ENCODE measurements at regions of chr19 and their contacts with region 1.

Region 1: GRCh38 chr19:16185123-16185767 is at the start of gene FAM32A:
- DNase-seq: peak; percentile 100
- H3K4me3 Mint-ChIP-seq: peak within 1 kb of the TSS; percentile 100
- H3K27ac Mint-ChIP-seq: peak within 1 kb of the TSS; percentile 100
- H3K4me1 Mint-ChIP-seq: peaks cover 22% of the 10 kb centered on the region
- H3K27me3 Mint-ChIP-seq: no peaks in the 10 kb centered on the region
- CTCF ChIP-seq: no peak
- total RNA-seq, gene FAM32A: 48.1 and 53.7 TPM in 2 replicates

Region 2: DNA sequence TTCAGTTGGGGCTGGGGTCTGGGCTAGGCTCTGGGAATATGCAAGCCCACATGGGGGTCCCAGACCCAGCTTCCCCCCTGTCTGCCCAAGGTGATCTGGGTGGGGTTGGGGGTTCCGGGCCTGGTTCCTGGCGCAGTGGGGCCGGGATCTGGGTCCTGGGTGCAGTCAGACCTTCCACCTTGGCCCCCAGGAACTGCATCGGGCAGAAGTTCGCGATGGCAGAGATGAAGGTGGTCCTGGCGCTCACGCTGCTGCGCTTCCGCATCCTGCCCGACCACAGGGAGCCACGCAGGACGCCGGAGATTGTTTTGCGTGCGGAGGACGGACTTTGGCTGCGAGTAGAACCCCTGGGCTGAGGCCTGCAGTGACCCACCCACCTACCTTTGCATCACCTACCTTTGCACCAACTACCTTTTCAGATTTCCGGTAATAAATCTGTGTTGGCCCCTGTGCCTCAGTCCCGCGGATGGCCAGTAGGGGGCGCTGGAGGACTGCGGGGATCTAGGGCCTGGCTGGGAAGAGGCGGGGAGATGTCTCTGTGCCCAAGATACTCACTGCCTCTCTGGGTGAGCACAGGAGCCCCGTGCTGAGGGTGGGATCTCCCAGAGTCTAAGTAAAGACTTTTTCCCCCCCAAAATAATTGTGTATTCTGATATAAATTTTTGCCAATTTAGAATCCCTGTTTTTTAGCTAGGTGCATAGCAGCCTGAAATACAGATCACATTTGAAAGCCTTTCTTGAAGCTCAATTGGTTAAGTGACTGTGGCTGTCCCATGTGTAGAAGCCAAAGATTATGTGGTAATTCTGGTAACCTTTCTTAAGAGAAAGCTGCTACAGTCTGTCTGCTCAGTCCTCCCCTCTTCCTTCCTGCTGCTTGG is 556.0 kb before region 1 on chr19:
- CTCF ChIA-PET with region 1: interaction called, 17 read pairs
- POLR2A ChIA-PET with region 1: interaction called, 3 read pairs
- intact Hi-C with region 1: loop called (anchors 1 kb)
- DNase-seq: peak; percentile 69
- H3K4me3 Mint-ChIP-seq: no peak overlapping the region
- H3K27ac Mint-ChIP-seq: no peak overlapping the region
- H3K4me1 Mint-ChIP-seq: no peaks in the 10 kb centered on the region
- H3K27me3 Mint-ChIP-seq: no peaks in the 10 kb centered on the region
- CTCF ChIP-seq: peak; percentile 95

Region 3: DNA sequence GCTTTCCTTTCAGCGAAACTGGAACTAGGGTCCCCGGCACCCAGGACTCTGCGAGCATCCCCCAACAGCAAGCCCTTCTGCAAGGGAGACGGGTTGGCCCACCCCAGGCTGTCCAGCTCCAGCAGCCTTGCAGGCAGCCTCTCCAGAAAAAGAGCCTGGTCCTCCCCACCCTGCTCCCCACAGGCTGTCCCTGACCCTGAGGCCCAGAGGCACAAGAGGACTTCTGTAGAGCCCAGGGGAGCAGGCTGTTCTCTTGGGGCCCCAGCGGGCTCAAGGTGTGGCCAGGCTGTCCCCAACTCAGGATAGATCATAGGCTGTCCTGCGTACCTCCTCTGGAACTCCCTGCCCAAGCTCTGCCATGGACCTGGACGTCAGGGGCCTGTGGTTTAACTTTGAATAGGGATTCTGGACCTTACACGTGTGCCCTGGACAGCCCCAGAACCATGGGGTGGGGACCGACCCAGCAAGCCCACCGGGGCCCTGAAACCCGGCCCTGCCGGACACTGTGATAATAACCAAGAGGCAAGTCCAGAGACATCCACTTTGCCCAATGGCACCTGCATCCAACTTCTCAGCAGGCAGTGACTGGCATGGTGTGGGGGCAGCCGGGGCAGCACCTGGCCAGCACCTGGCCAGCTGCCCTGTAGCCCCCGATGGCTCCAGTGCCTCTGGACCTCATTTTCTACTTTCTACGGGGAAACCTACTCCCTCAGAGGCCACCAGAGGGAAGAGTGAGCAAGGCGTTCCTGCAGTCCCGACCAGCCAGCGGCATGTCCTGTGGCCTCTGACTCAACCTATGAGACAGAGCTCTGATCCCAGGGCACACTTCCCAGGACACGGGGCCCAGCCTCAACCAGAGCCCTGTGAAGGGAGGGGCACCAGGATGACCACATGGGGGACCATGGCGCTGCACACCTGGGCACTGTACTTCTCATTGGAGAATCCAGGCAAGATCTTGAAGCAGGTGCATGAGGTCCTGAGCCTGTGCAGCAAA is 159.8 kb before region 1 on chr19:
- CTCF ChIA-PET with region 1: interaction called, 5 read pairs
- POLR2A ChIA-PET with region 1: no interaction called
- intact Hi-C with region 1: loop called (anchors 1 kb)
- DNase-seq: peak; percentile 74
- H3K4me3 Mint-ChIP-seq: no peak overlapping the region
- H3K27ac Mint-ChIP-seq: no peak overlapping the region
- H3K4me1 Mint-ChIP-seq: peaks cover 4% of the 10 kb centered on the region
- H3K27me3 Mint-ChIP-seq: no peaks in the 10 kb centered on the region
- CTCF ChIP-seq: peak; percentile 39

Region 4: GRCh38 chr19:16076154-16076957 is 108.9 kb before region 1 on chr19 and contains the start of gene TPM4:
- CTCF ChIA-PET with region 1: interaction called, 3 read pairs
- POLR2A ChIA-PET with region 1: interaction called, 6 read pairs
- intact Hi-C with region 1: loop called (anchors 1 kb)
- DNase-seq: peak; percentile 94
- H3K4me3 Mint-ChIP-seq: peak within 1 kb of the TSS; percentile 71
- H3K27ac Mint-ChIP-seq: peak within 1 kb of the TSS; percentile 99
- H3K4me1 Mint-ChIP-seq: peaks cover 19% of the 10 kb centered on the region
- H3K27me3 Mint-ChIP-seq: no peaks in the 10 kb centered on the region
- CTCF ChIP-seq: no peak
- total RNA-seq, gene TPM4: 355 and 424 TPM in 2 replicates

Region 5: GRCh38 chr19:16111160-16111908 is 73.9 kb before region 1 on chr19 and contains the start of gene RAB8A:
- CTCF ChIA-PET with region 1: interaction called, 3 read pairs
- POLR2A ChIA-PET with region 1: interaction called, 8 read pairs
- intact Hi-C with region 1: loop called (anchors 1 kb)
- DNase-seq: peak; percentile 99
- H3K4me3 Mint-ChIP-seq: peak within 1 kb of the TSS; percentile 90
- H3K27ac Mint-ChIP-seq: peak within 1 kb of the TSS; percentile 94
- H3K4me1 Mint-ChIP-seq: no peaks in the 10 kb centered on the region
- H3K27me3 Mint-ChIP-seq: no peaks in the 10 kb centered on the region
- CTCF ChIP-seq: peak; percentile 91
- total RNA-seq, gene RAB8A: 41.6 and 50.1 TPM in 2 replicates

Region 6: GRCh38 chr19:16197622-16198369 is 12.6 kb after region 1 on chr19 and contains the start of gene AP1M1:
- CTCF ChIA-PET with region 1: interaction called, 13 read pairs
- POLR2A ChIA-PET with region 1: interaction called, 24 read pairs
- intact Hi-C with region 1: loop called (anchors 1 kb)
- DNase-seq: peak; percentile 99
- H3K4me3 Mint-ChIP-seq: peak within 1 kb of the TSS; percentile 74
- H3K27ac Mint-ChIP-seq: peak within 1 kb of the TSS; percentile 59
- H3K4me1 Mint-ChIP-seq: peaks cover 31% of the 10 kb centered on the region
- H3K27me3 Mint-ChIP-seq: no peaks in the 10 kb centered on the region
- CTCF ChIP-seq: no peak
- total RNA-seq, gene AP1M1: 53.8 and 62.1 TPM in 2 replicates

Region 7: DNA sequence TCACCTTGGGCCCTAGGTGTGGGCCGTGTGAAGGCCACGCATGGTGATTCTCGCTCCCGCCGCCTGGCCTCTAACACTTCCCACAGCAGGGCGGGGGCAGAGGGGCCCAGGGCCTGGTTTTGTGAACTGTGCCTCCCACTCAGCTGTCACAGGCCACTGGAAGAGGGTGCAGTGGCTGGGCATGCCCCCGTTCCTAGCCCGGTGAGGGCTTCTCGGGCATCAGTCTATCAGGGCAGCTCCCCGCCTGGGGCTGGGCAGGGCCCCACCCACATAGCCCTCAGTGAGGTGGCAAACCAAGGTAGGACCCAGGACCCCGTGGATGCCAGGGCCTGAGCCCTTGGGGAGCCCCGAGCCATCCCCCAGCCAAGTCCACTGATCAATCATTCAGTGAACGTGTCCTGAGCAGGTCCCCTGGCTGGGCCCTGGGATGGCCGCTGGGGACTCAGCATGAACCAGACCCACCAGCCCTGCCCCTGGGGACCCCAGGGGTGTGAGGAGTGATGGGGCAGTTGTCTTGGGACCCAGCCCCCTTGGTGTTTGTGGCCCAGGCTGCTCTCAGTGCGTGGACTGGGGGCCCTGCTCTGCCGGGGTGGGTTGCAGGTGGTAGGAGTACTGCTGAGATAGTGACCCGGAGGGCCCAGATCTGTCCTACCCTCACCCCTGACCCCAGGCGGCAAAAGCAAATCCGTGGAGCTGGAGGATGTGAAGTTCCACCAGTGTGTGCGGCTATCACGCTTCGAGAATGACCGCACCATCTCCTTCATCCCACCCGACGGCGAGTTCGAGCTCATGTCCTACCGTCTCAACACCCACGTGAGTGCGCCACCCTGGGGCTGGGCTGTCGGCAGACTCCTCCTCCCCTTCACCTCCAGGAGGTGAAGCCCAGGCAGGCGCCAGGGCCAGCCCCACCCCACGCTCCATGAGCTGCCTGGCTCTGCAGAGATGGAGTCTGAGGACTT is 41.9 kb after region 1 on chr19:
- CTCF ChIA-PET with region 1: no interaction called
- POLR2A ChIA-PET with region 1: no interaction called
- intact Hi-C with region 1: no loop called
- DNase-seq: no peak
- H3K4me3 Mint-ChIP-seq: no peak overlapping the region
- H3K27ac Mint-ChIP-seq: no peak overlapping the region
- H3K4me1 Mint-ChIP-seq: no peaks in the 10 kb centered on the region
- H3K27me3 Mint-ChIP-seq: no peaks in the 10 kb centered on the region
- CTCF ChIP-seq: no peak